AG04450 (cell line): ENCODE measurements at regions of chr3 and their contacts with region 1.

Region 1: GRCh38 chr3:149603126-149604074 is 54.4 kb downstream of the WWTR1 start:
- DNase-seq: no peak
- H3K4me3 ChIP-seq: no peak overlapping the region
- H3K27ac ChIP-seq: no peak overlapping the region
- H3K27me3 ChIP-seq: no peaks in the 10 kb centered on the region
- CTCF ChIP-seq: no peak

Region 2: DNA sequence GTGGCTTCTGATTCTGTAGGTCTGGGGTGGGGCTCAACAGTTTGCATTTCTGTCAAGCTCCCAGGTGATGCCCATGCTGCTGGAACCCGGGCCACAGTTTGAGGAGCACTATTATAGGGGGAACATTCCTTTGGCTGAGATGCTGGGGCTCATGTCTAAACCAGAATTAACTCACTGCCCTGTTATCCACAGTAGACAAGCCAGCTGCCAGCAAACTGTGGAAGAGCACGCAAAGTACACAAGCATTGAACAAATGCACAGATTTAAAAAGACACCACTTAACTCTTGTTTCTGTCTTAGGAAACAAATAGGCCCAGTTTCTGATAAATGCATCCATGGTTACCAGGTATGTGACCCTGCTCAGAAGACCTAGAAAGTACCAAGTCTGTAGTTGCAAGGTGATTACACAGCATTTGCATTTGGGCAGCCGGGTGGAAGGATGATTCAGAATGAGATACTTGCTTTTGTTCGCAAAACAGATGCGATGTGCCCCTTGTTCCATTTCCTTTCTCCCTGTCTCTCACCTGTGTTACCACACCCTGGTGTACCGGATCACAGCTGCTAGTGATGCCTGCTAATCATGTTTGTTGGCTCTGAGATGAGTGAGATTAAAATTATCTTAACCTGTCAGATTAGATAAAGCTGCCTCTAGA is 599.6 kb before region 1 on chr3:
- CTCF ChIA-PET with region 1: no interaction called
- POLR2A ChIA-PET with region 1: no interaction called
- DNase-seq: no peak
- H3K4me3 ChIP-seq: no peak overlapping the region
- H3K27ac ChIP-seq: no peak overlapping the region
- H3K27me3 ChIP-seq: no peaks in the 10 kb centered on the region
- CTCF ChIP-seq: no peak

Region 3: GRCh38 chr3:149442851-149443544 is 160.4 kb before region 1 on chr3:
- CTCF ChIA-PET with region 1: no interaction called
- POLR2A ChIA-PET with region 1: no interaction called
- DNase-seq: no peak
- H3K4me3 ChIP-seq: no peak overlapping the region
- H3K27ac ChIP-seq: peak overlapping the region; percentile 43
- H3K27me3 ChIP-seq: no peaks in the 10 kb centered on the region
- CTCF ChIP-seq: no peak

Region 4: DNA sequence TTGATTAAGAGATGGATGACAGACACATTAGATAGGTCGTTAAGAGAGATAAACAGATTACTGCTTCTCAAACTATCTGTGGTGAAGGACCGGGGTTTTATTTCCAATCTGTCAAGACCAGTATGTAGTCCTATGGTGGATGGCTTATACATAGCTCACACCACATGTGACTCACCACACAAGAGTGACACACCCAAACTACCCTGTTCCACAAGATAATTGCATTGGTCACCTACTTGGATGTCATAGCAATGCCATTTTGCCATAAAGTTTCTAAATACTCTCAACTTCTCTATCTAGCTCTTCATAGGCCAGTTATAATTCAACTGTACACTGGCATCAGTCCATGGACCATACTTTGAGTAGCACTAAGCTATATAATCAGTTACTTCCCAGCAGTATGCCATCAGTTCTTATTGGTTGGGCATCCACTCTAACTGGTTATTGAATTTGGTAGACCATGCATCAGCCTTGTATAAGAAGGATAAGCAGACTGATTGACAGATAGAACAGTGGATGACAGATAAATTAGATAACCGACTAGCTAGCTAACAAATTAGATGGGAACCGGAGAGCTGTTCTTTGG is 42.9 kb after region 1 on chr3:
- CTCF ChIA-PET with region 1: no interaction called
- POLR2A ChIA-PET with region 1: interaction called, 11 read pairs
- DNase-seq: no peak
- H3K4me3 ChIP-seq: no peak overlapping the region
- H3K27ac ChIP-seq: no peak overlapping the region
- H3K27me3 ChIP-seq: no peaks in the 10 kb centered on the region
- CTCF ChIP-seq: no peak

Region 5: DNA sequence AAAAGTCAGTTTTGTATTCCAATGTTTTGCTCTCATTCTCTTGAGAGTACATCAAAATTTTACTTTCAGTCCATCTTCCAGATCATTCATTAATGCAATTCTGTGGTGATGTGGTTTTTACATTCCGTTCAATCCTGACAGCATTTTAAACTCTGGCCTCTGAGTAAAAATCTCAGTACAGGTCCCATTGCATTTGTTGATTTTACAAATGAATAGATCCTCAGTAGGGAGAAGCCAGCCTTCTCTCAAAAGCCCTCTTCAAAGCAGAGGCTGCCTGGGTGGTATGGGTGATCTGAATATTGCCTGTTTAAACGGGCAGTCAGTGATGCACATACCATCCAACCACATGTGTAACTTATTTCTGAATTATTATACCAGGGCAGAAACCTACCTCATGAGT is 732.2 kb after region 1 on chr3:
- CTCF ChIA-PET with region 1: no interaction called
- POLR2A ChIA-PET with region 1: interaction called, 11 read pairs
- DNase-seq: no peak
- H3K4me3 ChIP-seq: no peak overlapping the region
- H3K27ac ChIP-seq: no peak overlapping the region
- H3K27me3 ChIP-seq: no peaks in the 10 kb centered on the region
- CTCF ChIP-seq: no peak